ENCODE measurements at regions of chr9 and their contacts with region 1.

Region 1: GRCh38 chr9:38088006-38088925 is 19.2 kb upstream of the SHB start:
- DNase-seq: peak in 8 of 9 donors; percentile 26 to 79 (median 61)
- ATAC-seq: peak; percentile 91
- H3K4me3 ChIP-seq: no peak overlapping the region
- H3K4me3 Mint-ChIP-seq: no peak overlapping the region
- H3K27ac ChIP-seq: no peak overlapping the region
- H3K27ac Mint-ChIP-seq: peak overlapping the region in 1 of 9 donors; percentile 3
- H3K4me1 ChIP-seq: no peaks in the 10 kb centered on the region
- H3K4me1 Mint-ChIP-seq: peaks cover 0 to 4% (median 0%) of the 10 kb centered on the region in 7 donors
- H3K27me3 ChIP-seq: no peaks in the 10 kb centered on the region
- H3K27me3 Mint-ChIP-seq: peaks cover 0 to 21% (median 7%) of the 10 kb centered on the region in 5 donors

Region 2: GRCh38 chr9:37929441-37929895 is 158.8 kb before region 1 on chr9:
- CTCF ChIA-PET with region 1: no interaction called
- POLR2A ChIA-PET with region 1: no interaction called
- intact Hi-C with region 1: no loop called
- DNase-seq: no peak
- ATAC-seq: no peak
- H3K4me3 ChIP-seq: no peak overlapping the region
- H3K4me3 Mint-ChIP-seq: no peak overlapping the region
- H3K27ac ChIP-seq: no peak overlapping the region
- H3K27ac Mint-ChIP-seq: no peak overlapping the region
- H3K4me1 ChIP-seq: no peaks in the 10 kb centered on the region
- H3K4me1 Mint-ChIP-seq: peaks cover 0 to 3% (median 0%) of the 10 kb centered on the region in 7 donors
- H3K27me3 ChIP-seq: no peaks in the 10 kb centered on the region
- H3K27me3 Mint-ChIP-seq: no peaks in the 10 kb centered on the region

Region 3: GRCh38 chr9:38263532-38263931 is 175.3 kb after region 1 on chr9:
- CTCF ChIA-PET with region 1: no interaction called
- POLR2A ChIA-PET with region 1: no interaction called
- intact Hi-C with region 1: loop called in 1 of 2 experiments (anchors 1 kb)
- DNase-seq: no peak
- ATAC-seq: no peak
- H3K4me3 ChIP-seq: no peak overlapping the region
- H3K4me3 Mint-ChIP-seq: no peak overlapping the region
- H3K27ac ChIP-seq: no peak overlapping the region
- H3K27ac Mint-ChIP-seq: no peak overlapping the region
- H3K4me1 ChIP-seq: no peaks in the 10 kb centered on the region
- H3K4me1 Mint-ChIP-seq: no peaks in the 10 kb centered on the region
- H3K27me3 ChIP-seq: peaks cover 0 to 4% of the 10 kb centered on the region in 2 donors
- H3K27me3 Mint-ChIP-seq: peaks cover 8 to 32% (median 23%) of the 10 kb centered on the region in 5 donors

Region 4: GRCh38 chr9:38362852-38363593 is 274.8 kb after region 1 on chr9:
- CTCF ChIA-PET with region 1: no interaction called
- POLR2A ChIA-PET with region 1: no interaction called
- intact Hi-C with region 1: loop called in 1 of 2 experiments (anchors 2 kb)
- DNase-seq: peak in 6 of 9 donors; percentile 20 to 44 (median 32)
- ATAC-seq: peak; percentile 81
- H3K4me3 ChIP-seq: no peak overlapping the region
- H3K4me3 Mint-ChIP-seq: peak overlapping the region in 9 of 10 donors; percentile 43 to 69 (median 52)
- H3K27ac ChIP-seq: no peak overlapping the region
- H3K27ac Mint-ChIP-seq: peak overlapping the region in 2 of 9 donors; percentile 32 to 60
- H3K4me1 ChIP-seq: no peaks in the 10 kb centered on the region
- H3K4me1 Mint-ChIP-seq: peaks cover 0 to 6% (median 5%) of the 10 kb centered on the region in 7 donors
- H3K27me3 ChIP-seq: no peaks in the 10 kb centered on the region
- H3K27me3 Mint-ChIP-seq: peaks cover 0 to 9% (median 8%) of the 10 kb centered on the region in 5 donors

Region 5: GRCh38 chr9:38405785-38406184 is 317.5 kb after region 1 on chr9:
- CTCF ChIA-PET with region 1: no interaction called
- POLR2A ChIA-PET with region 1: no interaction called
- intact Hi-C with region 1: loop called (anchors 1 to 2 kb)
- DNase-seq: no peak
- ATAC-seq: no peak
- H3K4me3 ChIP-seq: no peak overlapping the region
- H3K4me3 Mint-ChIP-seq: no peak overlapping the region
- H3K27ac ChIP-seq: no peak overlapping the region
- H3K27ac Mint-ChIP-seq: no peak overlapping the region
- H3K4me1 ChIP-seq: no peaks in the 10 kb centered on the region
- H3K4me1 Mint-ChIP-seq: peaks cover 0 to 2% (median 0%) of the 10 kb centered on the region in 7 donors
- H3K27me3 ChIP-seq: no peaks in the 10 kb centered on the region
- H3K27me3 Mint-ChIP-seq: peaks cover 3 to 32% (median 6%) of the 10 kb centered on the region in 5 donors

Measured in naive thymus-derived CD4-positive, alpha-beta T cell (primary cell).